Gastrocnemius medialis (tissue), 4 donors: ENCODE measurements at regions of chr11 and their contacts with region 1.

Region 1: DNA sequence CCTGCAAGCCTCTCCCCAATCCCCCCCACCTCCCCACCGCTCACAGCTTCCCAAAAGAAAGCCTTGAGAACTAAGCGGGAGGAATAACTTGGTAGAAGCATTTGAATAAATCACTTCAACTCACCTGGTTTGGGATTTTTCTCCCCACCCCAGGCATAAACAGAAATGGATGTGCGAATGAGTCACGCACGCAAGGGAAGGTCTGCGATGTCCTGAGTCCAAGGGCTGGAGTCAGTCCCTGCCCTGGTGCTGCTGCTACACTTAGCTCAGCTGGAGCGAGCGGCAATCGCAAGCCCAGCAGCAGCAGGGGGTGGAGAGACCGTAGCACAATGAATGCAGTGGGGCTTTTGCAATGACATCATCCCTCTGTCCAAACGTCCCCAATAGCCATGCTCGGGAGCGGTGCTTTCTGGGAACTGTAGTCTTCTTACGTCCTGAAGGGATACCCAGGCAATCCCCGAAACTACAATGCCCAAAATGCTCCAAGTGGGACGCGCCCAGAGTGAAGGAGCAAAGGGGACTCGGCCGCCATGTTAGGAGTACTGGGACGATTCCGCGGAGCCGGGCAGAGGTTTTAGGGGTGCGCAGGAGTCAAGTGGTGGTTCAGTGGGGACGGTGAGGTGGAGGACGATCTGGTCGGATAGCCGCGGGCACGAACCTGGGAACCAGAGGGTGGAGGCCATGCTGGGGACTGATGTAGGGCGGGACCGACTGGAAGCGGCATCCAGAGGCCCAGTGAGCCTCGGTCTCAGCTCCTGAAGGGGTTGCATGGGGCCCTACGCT is at the start of gene RAB30:
- DNase-seq: peak; percentile 99
- ATAC-seq: peak; percentile 95 to 97
- H3K4me3 ChIP-seq: peak within 1 kb of the TSS; percentile 73 to 90 (median 83)
- H3K27ac ChIP-seq: peak within 1 kb of the TSS; percentile 87 to 98 (median 96)
- H3K4me1 ChIP-seq: peaks cover 42 to 54% of the 10 kb centered on the region in 2 donors
- H3K27me3 ChIP-seq: no peaks in the 10 kb centered on the region
- CTCF ChIP-seq: no peak
- POLR2A ChIP-seq: peak; percentile 91 to 94
- total RNA-seq, gene RAB30: 29.8 to 57.1 (median 33.9) TPM

Region 2: DNA sequence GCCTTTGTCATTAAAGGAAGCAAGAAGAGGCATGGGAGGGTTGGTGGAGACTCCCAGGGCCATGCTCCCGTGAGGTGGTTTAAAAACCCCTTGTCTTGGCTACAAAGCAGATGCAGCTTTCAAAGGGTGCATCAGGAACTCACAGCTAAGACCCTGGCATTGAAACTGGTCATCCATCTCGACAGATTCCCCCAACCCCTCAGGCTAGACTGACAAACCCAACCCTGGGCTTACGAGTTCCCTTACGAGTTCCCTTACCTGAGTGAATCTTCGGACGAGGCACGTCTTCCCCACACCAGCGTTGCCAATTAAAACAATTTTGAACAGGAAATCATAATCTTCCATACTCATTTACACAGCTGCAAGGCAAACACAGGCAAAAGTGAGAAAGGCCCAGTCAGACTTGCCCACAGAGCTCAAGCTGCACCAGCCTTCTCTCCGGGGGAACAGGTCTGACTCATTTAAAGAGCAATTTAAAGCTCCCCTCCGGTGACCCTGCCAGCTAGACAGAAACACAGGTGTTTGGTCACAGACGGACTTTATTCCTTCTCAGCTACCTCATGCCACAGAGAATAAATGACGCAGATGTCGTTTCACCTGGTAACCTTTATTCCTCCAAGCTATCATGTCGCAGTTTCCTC is 74.7 kb before region 1 on chr11:
- in situ Hi-C with region 1: no loop called
- intact Hi-C with region 1: loop called (anchors 5 kb)
- DNase-seq: peak in 1 of 2 donors; percentile 52
- ATAC-seq: peak; percentile 37 to 57
- H3K4me3 ChIP-seq: peak overlapping the region in 2 of 4 donors; percentile 11 to 24
- H3K27ac ChIP-seq: peak overlapping the region; percentile 55 to 75 (median 69)
- H3K4me1 ChIP-seq: peaks cover 92 to 97% of the 10 kb centered on the region in 2 donors
- H3K27me3 ChIP-seq: no peaks in the 10 kb centered on the region
- CTCF ChIP-seq: no peak
- POLR2A ChIP-seq: peak in 1 of 2 donors; percentile 20

Region 3: GRCh38 chr11:83051760-83052671 is 19.7 kb before region 1 on chr11:
- in situ Hi-C with region 1: no loop called
- intact Hi-C with region 1: loop called (anchors 2 kb)
- DNase-seq: peak; percentile 28 to 64
- ATAC-seq: peak; percentile 84 to 86
- H3K4me3 ChIP-seq: no peak overlapping the region
- H3K27ac ChIP-seq: peak overlapping the region; percentile 82 to 93 (median 88)
- H3K4me1 ChIP-seq: peaks cover 67 to 71% of the 10 kb centered on the region in 2 donors
- H3K27me3 ChIP-seq: no peaks in the 10 kb centered on the region
- CTCF ChIP-seq: no peak
- POLR2A ChIP-seq: no peak

Region 4: DNA sequence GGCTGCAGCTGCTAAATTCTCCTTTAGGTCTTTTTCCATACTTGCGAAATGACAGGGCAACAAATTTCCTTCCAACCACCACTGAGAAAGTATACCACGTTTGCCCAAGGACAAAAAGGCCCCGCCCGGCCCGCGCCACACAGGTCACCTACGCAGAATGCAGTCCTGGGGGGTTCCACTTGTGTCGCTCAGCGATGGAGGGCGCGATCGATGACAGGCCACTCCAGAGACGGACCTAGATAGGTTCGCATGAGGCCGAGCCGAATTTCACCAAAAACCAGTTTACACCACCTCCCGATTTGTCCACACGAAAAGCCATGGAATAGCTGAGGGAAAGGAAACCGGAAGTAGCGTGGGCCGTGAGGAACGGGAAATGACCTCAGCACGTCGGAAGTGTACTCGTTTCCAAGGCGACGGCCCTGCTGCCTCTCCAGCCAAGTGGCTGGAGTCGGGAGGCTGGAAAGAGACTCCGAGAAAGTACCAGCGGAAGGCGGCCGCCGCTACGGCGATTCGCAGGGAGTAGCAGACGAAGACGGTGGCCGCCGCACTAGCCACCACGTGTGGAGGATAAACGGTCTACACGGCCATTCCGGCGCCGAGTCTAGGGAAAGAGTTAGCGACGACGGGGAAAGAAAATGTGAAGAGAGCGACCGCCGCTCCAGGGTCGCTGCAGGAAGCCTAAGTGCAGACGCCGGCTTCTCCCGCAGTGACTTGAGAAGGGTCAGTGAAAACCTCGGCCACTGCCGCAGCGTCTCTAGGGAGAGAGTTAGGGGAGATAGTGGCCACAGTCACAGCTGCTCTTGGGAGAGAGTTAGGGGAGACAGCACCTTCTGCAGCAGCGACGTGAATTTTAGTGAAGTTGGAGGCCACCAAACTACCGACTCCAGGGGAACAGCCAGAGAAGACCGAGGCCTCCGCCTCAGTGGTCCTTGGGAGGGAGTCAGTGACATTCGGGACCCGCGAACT is 121.8 kb after region 1 on chr11 and contains the start of gene ANKRD42:
- in situ Hi-C with region 1: no loop called
- intact Hi-C with region 1: loop called (anchors 1 kb)
- DNase-seq: peak; percentile 91
- ATAC-seq: peak; percentile 98 to 99
- H3K4me3 ChIP-seq: peak within 1 kb of the TSS; percentile 72 to 87 (median 84)
- H3K27ac ChIP-seq: peak within 1 kb of the TSS; percentile 84 to 95 (median 90)
- H3K4me1 ChIP-seq: peaks cover 18 to 23% of the 10 kb centered on the region in 2 donors
- H3K27me3 ChIP-seq: no peaks in the 10 kb centered on the region
- CTCF ChIP-seq: peak in 1 of 5 experiments; percentile 17
- POLR2A ChIP-seq: peak; percentile 50 to 78
- total RNA-seq, gene ANKRD42: 2.1 to 3.7 (median 3.4) TPM